IMR-90 (cell line): ENCODE measurements at regions of chr17 and their contacts with region 1.

Region 1: GRCh38 chr17:39808409-39808997 is 55.6 kb downstream of the IKZF3 start:
- DNase-seq: no peak
- ATAC-seq: no peak
- H3K4me3 ChIP-seq: no peak overlapping the region
- H3K27ac ChIP-seq: no peak overlapping the region
- H3K4me1 ChIP-seq: no peaks in the 10 kb centered on the region
- H3K27me3 ChIP-seq: peaks cover 45% of the 10 kb centered on the region
- CTCF ChIP-seq: no peak
- POLR2A ChIP-seq: no peak
- RAD21 ChIP-seq: no peak

Region 2: DNA sequence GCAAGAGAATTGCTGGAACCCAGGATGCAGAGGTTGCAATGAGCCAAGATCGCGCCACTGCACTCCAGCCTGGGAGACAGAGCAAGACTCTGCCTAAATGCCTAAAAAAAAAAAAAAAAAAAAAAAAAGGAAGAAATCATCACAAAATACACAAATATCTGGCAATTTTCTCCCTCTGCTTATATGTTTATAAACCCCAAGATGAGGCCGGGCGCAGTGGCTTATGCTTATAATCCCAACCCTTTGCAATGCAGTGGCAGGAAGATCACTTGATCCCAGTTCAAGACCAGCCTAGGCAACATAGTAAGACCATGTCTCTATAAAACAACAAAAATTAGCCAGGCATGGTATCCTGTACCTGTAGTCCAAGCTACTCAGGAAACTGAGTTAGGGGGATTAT is 378.9 kb before region 1 on chr17:
- CTCF ChIA-PET with region 1: no interaction called
- POLR2A ChIA-PET with region 1: no interaction called
- dilution Hi-C with region 1: no loop called
- in situ Hi-C with region 1: no loop called
- intact Hi-C with region 1: no loop called
- DNase-seq: no peak
- ATAC-seq: no peak
- H3K4me3 ChIP-seq: no peak overlapping the region
- H3K27ac ChIP-seq: no peak overlapping the region
- H3K4me1 ChIP-seq: no peaks in the 10 kb centered on the region
- H3K27me3 ChIP-seq: no peaks in the 10 kb centered on the region
- CTCF ChIP-seq: no peak
- POLR2A ChIP-seq: no peak
- RAD21 ChIP-seq: no peak

Region 3: GRCh38 chr17:39845052-39845846 is 36.7 kb after region 1 on chr17:
- CTCF ChIA-PET with region 1: no interaction called
- POLR2A ChIA-PET with region 1: no interaction called
- dilution Hi-C with region 1: no loop called
- in situ Hi-C with region 1: no loop called
- intact Hi-C with region 1: loop called (anchors 5 kb)
- DNase-seq: peak; percentile 5
- ATAC-seq: no peak
- H3K4me3 ChIP-seq: no peak overlapping the region
- H3K27ac ChIP-seq: no peak overlapping the region
- H3K4me1 ChIP-seq: no peaks in the 10 kb centered on the region
- H3K27me3 ChIP-seq: peaks cover 44% of the 10 kb centered on the region
- CTCF ChIP-seq: no peak
- POLR2A ChIP-seq: no peak
- RAD21 ChIP-seq: no peak